Activated naive CD4-positive, alpha-beta T cell treated with anti-CD3 and anti-CD28 coated beads for 36 hours (primary cell): ENCODE measurements at regions of chr2 and their contacts with region 1.

Region 1: DNA sequence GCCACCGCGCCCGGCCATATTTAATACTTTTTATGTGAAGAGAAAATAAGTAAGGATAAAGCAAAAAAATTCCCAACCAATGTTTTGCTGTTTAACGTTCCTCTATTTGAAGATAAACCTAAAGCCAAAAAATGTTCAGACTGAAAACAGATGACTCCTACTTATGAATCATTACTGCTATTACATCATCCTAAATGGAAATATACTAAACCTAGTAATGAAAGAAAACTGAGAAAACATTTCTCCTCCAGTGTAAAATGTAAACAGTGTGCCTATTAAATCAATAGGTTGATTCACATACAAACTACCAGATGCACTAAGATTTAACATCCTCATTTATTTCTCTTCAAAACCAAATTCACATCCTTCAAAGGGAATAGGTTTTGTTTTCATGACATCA is 43.5 kb downstream of the CWC22 start:
- DNase-seq: no peak
- H3K4me3 Mint-ChIP-seq: no peak overlapping the region
- H3K27ac Mint-ChIP-seq: peak overlapping the region; percentile 66
- H3K4me1 Mint-ChIP-seq: peaks cover 6% of the 10 kb centered on the region
- H3K27me3 Mint-ChIP-seq: no peaks in the 10 kb centered on the region

Region 2: GRCh38 chr2:179991344-179991743 is 27.7 kb after region 1 on chr2:
- CTCF ChIA-PET with region 1: no interaction called
- intact Hi-C with region 1: loop called (anchors 2 kb)
- DNase-seq: no peak
- H3K4me3 Mint-ChIP-seq: no peak overlapping the region
- H3K27ac Mint-ChIP-seq: peak overlapping the region; percentile 6
- H3K4me1 Mint-ChIP-seq: peaks cover 41% of the 10 kb centered on the region
- H3K27me3 Mint-ChIP-seq: no peaks in the 10 kb centered on the region

Region 3: DNA sequence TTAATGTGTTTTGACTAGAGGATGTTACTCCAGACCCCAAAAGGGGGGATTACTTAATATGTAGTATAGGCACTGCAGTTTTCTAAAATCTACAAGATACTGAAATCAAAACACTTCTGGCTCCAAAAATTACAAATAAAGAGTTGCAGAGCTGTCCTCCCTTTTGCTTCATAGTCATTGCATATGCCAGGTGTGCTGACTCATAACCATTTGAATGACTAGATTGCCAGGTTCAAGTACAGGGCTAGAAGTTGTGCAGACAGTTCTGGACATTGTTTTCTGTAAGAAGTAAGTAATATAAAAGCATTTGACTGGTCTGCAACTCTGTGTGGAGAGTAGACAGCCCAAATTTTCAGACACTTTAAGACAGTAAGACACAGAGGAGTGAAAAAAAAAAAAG is 36.8 kb after region 1 on chr2:
- CTCF ChIA-PET with region 1: no interaction called
- intact Hi-C with region 1: loop called (anchors 1 kb)
- DNase-seq: no peak
- H3K4me3 Mint-ChIP-seq: no peak overlapping the region
- H3K27ac Mint-ChIP-seq: no peak overlapping the region
- H3K4me1 Mint-ChIP-seq: peaks cover 74% of the 10 kb centered on the region
- H3K27me3 Mint-ChIP-seq: no peaks in the 10 kb centered on the region

Region 4: GRCh38 chr2:180122874-180123273 is 159.2 kb after region 1 on chr2:
- CTCF ChIA-PET with region 1: no interaction called
- intact Hi-C with region 1: no loop called
- DNase-seq: no peak
- H3K4me3 Mint-ChIP-seq: no peak overlapping the region
- H3K27ac Mint-ChIP-seq: no peak overlapping the region
- H3K4me1 Mint-ChIP-seq: peaks cover 3% of the 10 kb centered on the region
- H3K27me3 Mint-ChIP-seq: peaks cover 12% of the 10 kb centered on the region